Transverse colon (tissue), 4 donors: ENCODE measurements at regions of chr12 and their contacts with region 1.

Region 1: DNA sequence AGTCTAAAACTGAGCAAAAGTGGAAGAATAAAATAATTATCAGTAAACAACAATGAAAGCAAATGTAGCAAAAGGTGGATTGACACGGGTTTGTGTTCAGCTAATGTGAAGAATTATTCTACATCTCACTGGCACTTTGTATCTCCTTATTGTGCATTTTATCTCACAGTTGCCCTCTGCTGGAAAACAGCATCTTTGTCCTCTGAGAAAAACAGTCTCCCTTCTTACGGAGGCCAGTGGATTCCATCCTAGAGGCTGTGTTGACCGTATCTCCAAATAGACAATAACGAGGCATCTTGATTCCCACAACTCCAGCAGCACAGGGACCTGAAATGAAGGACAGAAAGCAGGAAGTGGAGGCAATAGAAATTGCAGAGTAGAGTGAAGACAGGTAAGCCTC is 51.3 kb upstream of the PLBD1 start:
- DNase-seq: no peak
- H3K4me3 ChIP-seq: no peak overlapping the region
- H3K27ac ChIP-seq: peak overlapping the region; percentile 61 to 66 (median 62)
- H3K4me1 ChIP-seq: peaks cover 7 to 28% (median 20%) of the 10 kb centered on the region in 4 donors
- H3K27me3 ChIP-seq: no peaks in the 10 kb centered on the region
- CTCF ChIP-seq: peak; percentile 16 to 49 (median 28)
- EP300 ChIP-seq: no peak
- POLR2A ChIP-seq: no peak

Region 2: DNA sequence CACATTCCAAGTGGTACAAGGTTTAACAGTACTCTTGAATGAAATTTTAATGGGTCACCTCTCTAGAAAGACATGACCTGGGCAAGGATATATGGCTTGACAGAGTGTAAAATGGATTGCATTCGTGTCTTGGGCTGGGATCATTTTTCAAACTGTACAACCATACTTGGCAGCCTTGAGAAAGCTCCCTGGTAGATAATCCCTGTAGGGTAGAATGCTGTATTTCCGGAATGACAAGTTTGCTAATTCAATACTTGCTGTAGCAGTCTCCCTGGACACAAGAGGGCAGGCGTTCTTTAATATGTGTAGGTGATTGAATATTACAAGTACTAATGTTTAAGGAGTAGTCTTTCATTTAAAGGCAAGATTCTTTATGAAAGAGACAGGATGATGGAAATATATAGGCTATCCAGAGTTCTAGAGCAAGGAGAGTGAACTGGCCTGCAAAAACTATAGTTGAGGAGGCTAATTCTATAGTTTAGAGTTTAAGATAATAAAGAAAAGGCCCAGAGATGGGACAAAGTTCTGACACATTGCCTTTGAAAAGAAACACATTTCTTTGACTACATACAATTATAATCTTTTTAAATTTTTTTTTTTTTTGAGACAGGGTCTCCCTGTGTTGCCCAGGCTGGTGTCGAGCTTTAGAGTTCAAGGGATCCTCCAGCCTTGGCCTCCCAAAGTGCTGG is 104.7 kb before region 1 on chr12:
- in situ Hi-C with region 1: loop called in 1 of 4 experiments (anchors 25 kb)
- intact Hi-C with region 1: no loop called
- DNase-seq: peak; percentile 65
- H3K4me3 ChIP-seq: no peak overlapping the region
- H3K27ac ChIP-seq: peak overlapping the region; percentile 35 to 60 (median 49)
- H3K4me1 ChIP-seq: peaks cover 0 to 13% (median 4%) of the 10 kb centered on the region in 4 donors
- H3K27me3 ChIP-seq: no peaks in the 10 kb centered on the region
- CTCF ChIP-seq: peak; percentile 17 to 85 (median 60)
- EP300 ChIP-seq: no peak
- POLR2A ChIP-seq: no peak